Activated B cell treated with CpG ODN at 0.5 μM for 24 hours (primary cell): ENCODE measurements at regions of chr9 and their contacts with region 1.

Region 1: GRCh38 chr9:109574068-109574882 is 76.2 kb upstream of the PTPN3 start:
- DNase-seq: no peak
- ATAC-seq: peak; percentile 47
- H3K4me3 Mint-ChIP-seq: no peak overlapping the region
- H3K27ac Mint-ChIP-seq: no peak overlapping the region
- H3K4me1 Mint-ChIP-seq: no peaks in the 10 kb centered on the region
- H3K27me3 Mint-ChIP-seq: peaks cover 4% of the 10 kb centered on the region
- CTCF ChIP-seq: no peak

Region 2: DNA sequence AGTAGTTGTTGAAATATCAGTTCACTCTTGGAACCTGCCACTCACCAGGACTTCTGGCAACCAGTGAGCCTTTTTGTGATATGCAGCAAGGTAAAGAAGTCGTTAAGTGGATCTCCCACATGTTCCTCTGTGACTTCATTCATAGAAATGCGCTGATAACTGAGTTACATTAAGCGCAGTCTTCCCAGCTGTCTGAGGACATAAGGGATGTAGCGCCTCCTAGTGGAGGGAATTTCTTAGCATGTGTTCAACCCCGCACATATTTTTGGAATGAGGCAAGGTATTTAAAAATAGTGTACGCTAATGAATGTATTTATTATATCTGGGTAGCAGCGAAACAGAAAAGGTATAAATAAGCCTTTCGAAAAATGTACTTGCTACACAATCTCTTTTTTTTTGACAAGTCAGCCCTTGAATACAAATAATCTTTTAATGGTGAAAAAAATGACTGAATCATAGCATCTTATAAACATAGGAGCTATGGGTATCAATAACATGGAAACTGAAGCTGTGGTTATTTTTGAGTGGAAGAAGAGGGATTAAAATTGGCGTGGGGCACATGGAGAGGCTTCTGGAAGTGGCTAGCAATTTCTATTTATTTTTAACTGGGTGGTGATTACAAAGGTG is 243.7 kb after region 1 on chr9:
- CTCF ChIA-PET with region 1: interaction called, 4 read pairs
- POLR2A ChIA-PET with region 1: no interaction called
- intact Hi-C with region 1: loop called (anchors 1 kb)
- DNase-seq: no peak
- ATAC-seq: no peak
- H3K4me3 Mint-ChIP-seq: no peak overlapping the region
- H3K27ac Mint-ChIP-seq: no peak overlapping the region
- H3K4me1 Mint-ChIP-seq: no peaks in the 10 kb centered on the region
- H3K27me3 Mint-ChIP-seq: peaks cover 23% of the 10 kb centered on the region
- CTCF ChIP-seq: no peak

Region 3: GRCh38 chr9:110058304-110058953 is 484.2 kb after region 1 on chr9:
- CTCF ChIA-PET with region 1: no interaction called
- POLR2A ChIA-PET with region 1: no interaction called
- intact Hi-C with region 1: loop called (anchors 1 kb)
- DNase-seq: no peak
- ATAC-seq: peak; percentile 75
- H3K4me3 Mint-ChIP-seq: peak overlapping the region; percentile 33
- H3K27ac Mint-ChIP-seq: peak overlapping the region; percentile 83
- H3K4me1 Mint-ChIP-seq: peaks cover 73% of the 10 kb centered on the region
- H3K27me3 Mint-ChIP-seq: no peaks in the 10 kb centered on the region
- CTCF ChIP-seq: no peak

Region 4: DNA sequence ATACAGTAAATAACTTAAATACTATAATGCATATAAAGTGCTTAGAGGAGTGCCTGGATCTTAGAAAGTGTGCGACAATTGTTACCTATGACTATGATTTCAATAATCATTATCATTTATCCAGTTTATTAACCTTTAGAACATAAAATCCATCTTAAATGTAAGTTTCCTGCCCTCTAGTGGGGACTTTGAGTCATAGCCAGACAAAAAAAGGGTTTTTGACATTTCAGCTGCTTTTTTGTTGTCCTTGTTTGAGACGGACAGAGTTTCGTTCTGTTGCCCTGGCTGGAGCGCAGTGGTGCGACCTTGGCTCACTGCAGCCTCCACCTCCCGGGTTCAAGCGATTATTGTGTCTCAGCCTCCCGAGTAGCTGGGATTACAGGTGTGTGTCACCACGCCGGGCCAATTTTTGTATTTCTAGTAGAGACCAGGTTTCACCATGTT is 643.4 kb after region 1 on chr9:
- CTCF ChIA-PET with region 1: interaction called, 51 read pairs
- POLR2A ChIA-PET with region 1: no interaction called
- intact Hi-C with region 1: no loop called
- DNase-seq: no peak
- ATAC-seq: no peak
- H3K4me3 Mint-ChIP-seq: no peak overlapping the region
- H3K27ac Mint-ChIP-seq: no peak overlapping the region
- H3K4me1 Mint-ChIP-seq: peaks cover 4% of the 10 kb centered on the region
- H3K27me3 Mint-ChIP-seq: peaks cover 2% of the 10 kb centered on the region
- CTCF ChIP-seq: no peak

Region 5: DNA sequence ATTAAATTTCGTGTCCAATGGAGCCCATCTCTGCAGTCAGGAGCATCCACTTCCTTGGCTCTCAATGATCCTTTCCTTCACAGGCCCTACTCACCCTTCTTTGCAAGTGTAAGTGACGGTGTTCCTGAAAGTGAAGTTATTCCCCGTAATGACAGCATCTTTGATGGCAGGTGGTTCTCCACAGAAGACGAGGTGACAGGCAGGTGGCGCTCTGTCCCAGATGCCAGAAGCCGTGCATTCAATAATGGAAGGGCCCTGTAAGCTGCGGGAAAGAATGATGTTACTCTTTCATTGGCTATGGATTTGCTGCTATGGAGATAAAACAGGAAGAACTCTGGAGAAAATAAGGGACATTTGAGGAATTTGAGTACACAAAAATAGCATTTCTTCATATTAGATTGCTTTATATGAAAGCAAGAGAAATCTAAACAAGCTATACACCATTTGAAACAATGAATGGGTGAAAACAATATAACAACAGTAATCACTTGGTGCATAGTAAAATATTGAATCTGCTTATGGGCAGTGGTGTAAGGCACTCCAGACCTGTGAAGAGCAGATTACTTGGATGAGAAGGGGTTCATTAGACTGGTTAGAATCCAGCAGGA is 853.3 kb after region 1 on chr9:
- CTCF ChIA-PET with region 1: no interaction called
- POLR2A ChIA-PET with region 1: no interaction called
- intact Hi-C with region 1: loop called (anchors 10 kb)
- DNase-seq: no peak
- ATAC-seq: no peak
- H3K4me3 Mint-ChIP-seq: no peak overlapping the region
- H3K27ac Mint-ChIP-seq: no peak overlapping the region
- H3K4me1 Mint-ChIP-seq: no peaks in the 10 kb centered on the region
- H3K27me3 Mint-ChIP-seq: peaks cover 2% of the 10 kb centered on the region
- CTCF ChIP-seq: no peak

Region 6: DNA sequence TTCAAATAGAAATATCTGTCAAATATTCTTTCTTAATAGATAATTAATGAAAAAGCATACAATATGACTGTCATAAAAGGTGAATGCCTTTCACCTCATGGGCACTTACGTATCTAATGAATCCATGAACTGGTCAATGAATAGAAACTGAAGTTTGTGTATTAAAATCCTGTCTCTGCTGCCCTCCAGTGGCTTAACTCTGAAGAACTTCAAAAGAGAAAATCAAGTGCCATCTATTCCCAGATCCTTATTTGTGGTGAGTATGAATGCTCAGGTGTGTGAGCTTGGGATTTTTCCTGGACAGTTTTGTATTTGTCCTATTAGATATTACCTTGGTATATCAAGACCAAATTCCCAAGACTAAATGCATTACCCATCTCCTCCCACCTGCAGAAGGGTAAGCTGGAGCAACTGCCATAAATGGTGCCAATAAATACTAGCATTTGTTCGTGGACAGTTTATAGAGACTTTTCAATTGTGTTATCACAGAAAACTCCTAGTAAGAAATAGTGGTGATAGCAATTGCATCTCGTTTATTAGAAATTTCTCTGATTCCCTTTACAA is 1049.3 kb after region 1 on chr9:
- CTCF ChIA-PET with region 1: interaction called, 12 read pairs
- POLR2A ChIA-PET with region 1: no interaction called
- intact Hi-C with region 1: loop called (anchors 1 kb)
- DNase-seq: no peak
- ATAC-seq: no peak
- H3K4me3 Mint-ChIP-seq: no peak overlapping the region
- H3K27ac Mint-ChIP-seq: no peak overlapping the region
- H3K4me1 Mint-ChIP-seq: no peaks in the 10 kb centered on the region
- H3K27me3 Mint-ChIP-seq: no peaks in the 10 kb centered on the region
- CTCF ChIP-seq: no peak